GM13976 (cell line): ENCODE measurements at regions of chr2 and their contacts with region 1.

Region 1: GRCh38 chr2:176079831-176080539 is 3.8 kb downstream of the EVX2 start:
- DNase-seq: peak; percentile 66
- CTCF ChIP-seq: peak; percentile 54

Region 2: GRCh38 chr2:175690113-175690837 is 389.7 kb before region 1 on chr2:
- in situ Hi-C with region 1: loop called (anchors 10 kb)
- DNase-seq: peak; percentile 29
- CTCF ChIP-seq: peak; percentile 39

Region 3: DNA sequence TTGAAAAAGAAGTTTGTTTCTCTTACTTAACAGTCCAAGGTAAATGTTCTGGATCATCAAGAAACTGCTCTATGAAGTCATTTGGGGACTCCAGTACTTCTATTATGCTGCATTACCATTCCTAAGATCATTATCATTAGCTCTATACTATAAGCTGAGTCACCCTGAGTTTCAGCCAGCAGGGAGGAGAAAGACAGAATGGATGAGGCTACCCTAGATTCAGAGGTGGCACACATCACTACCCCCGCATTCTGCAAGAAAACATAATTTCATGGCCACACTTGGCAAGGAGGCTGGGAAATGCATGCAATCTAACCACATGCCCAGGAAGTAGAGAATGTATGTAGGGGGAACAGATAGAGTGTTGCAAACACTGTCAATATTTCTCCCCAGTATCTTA is 61.3 kb before region 1 on chr2:
- in situ Hi-C with region 1: no loop called
- DNase-seq: no peak
- CTCF ChIP-seq: no peak

Region 4: DNA sequence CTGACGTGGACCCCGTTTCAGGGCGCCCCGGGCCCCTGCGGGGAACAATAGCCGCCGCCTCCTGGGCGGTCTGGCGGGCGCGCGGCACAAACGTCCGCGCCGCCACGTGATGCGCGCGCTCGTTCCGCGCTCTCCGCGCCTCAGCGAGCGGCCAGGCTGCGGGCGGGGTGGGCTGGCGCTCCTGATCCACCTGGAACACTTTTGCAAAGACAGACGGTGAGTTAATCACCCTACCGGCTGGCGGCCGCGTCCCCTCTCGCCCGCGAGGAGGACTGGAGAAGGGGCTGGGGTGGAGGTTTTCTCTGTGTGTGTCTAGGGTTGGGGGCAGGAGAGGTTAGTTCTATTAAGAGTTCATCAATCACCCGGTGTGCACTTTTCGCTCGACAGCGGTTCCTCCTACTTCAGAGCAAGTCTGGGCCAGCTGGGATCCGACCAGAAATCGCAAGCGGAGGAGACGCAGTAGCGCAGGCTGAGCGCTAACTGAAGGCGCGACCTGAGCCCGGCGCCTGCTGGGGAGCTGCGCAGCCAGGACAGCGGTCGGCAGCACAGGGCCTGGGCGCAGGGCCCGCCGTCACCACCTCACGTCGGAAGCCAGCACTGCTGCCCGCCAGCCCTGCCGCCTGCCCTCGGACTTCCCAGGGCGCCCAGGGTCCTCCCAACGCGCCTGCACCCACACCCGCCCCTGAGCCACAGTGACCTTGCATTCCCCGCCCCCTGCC is 98.2 kb after region 1 on chr2:
- in situ Hi-C with region 1: no loop called
- DNase-seq: no peak
- CTCF ChIP-seq: no peak